Right lobe of liver (tissue), 6 donors: ENCODE measurements at regions of chr20 and their contacts with region 1.

Region 1: GRCh38 chr20:63309261-63310071 is 16.5 kb downstream of the COL20A1 start:
- DNase-seq: peak in 2 of 3 donors; percentile 52 to 62
- ATAC-seq: peak; percentile 50 to 76 (median 69)
- H3K4me3 ChIP-seq: no peak overlapping the region
- H3K27ac ChIP-seq: no peak overlapping the region
- H3K4me1 ChIP-seq: no peaks in the 10 kb centered on the region
- H3K27me3 ChIP-seq: no peaks in the 10 kb centered on the region
- CTCF ChIP-seq: peak; percentile 77 to 83 (median 79)
- POLR2A ChIP-seq: no peak

Region 2: GRCh38 chr20:63163596-63164455 is 145.6 kb before region 1 on chr20:
- intact Hi-C with region 1: no loop called
- DNase-seq: no peak
- ATAC-seq: no peak
- H3K4me3 ChIP-seq: no peak overlapping the region
- H3K27ac ChIP-seq: no peak overlapping the region
- H3K4me1 ChIP-seq: no peaks in the 10 kb centered on the region
- H3K27me3 ChIP-seq: no peaks in the 10 kb centered on the region
- CTCF ChIP-seq: no peak
- POLR2A ChIP-seq: no peak

Region 3: DNA sequence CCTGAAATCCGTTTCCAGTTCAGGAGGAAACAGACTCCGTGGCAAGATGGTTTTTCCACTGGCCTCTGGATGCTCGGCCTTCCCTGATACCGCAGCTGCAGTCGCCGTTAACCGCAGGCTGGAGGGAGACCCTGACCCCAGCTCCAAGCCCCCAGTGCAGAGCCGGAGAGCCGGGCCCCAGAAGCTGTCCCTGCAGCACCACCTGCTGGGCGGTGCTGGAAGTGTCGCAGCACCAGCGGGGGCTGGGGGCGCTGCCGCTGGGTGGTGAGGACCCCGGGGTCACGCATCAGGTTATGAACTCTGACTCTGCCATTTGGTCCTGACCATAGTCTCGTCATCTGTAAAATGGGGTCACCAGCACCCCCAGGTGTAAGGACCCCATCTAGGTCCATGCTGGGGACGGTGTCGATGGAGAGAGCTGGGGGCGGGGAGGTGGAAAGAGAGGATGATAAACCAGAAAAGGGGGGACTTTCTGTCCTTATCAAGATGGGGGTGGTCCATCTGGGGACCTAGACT is 72.4 kb after region 1 on chr20:
- intact Hi-C with region 1: loop called (anchors 5 kb)
- DNase-seq: no peak
- ATAC-seq: peak; percentile 48 to 73 (median 65)
- H3K4me3 ChIP-seq: no peak overlapping the region
- H3K27ac ChIP-seq: no peak overlapping the region
- H3K4me1 ChIP-seq: no peaks in the 10 kb centered on the region
- H3K27me3 ChIP-seq: no peaks in the 10 kb centered on the region
- CTCF ChIP-seq: peak; percentile 92 to 97 (median 95)
- POLR2A ChIP-seq: no peak

Region 4: DNA sequence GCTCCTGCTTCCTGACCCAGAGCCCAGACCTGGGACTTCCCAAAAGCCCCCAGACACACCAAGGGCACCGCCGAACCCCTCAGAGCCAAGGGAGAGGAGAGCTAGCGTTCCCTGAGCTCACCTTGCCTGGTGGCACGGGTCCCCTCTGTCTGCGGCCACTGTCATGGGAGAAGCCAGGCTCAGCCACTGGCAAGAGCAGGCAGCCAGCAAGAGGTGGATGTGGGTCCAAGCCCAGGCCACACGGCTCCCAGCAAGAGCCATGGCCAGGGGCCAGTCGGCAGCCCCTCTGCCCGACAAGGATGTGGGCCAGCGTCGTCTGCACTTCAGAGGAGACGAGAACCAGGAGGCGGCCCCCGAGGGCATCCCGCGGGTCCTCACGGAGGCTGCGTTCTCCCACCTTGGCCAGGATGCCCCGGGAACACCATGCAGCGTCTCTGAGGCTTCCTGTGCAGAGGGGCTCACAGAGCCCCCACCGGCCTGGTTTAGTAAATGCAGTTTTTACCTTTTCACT is 208.9 kb after region 1 on chr20:
- intact Hi-C with region 1: no loop called
- DNase-seq: peak in 2 of 3 donors; percentile 44 to 51
- ATAC-seq: no peak
- H3K4me3 ChIP-seq: no peak overlapping the region
- H3K27ac ChIP-seq: no peak overlapping the region
- H3K4me1 ChIP-seq: peaks cover 0 to 10% (median 2%) of the 10 kb centered on the region in 4 donors
- H3K27me3 ChIP-seq: no peaks in the 10 kb centered on the region
- CTCF ChIP-seq: no peak
- POLR2A ChIP-seq: no peak